ENCODE measurements at regions of chrX and their contacts with region 1.

Region 1: DNA sequence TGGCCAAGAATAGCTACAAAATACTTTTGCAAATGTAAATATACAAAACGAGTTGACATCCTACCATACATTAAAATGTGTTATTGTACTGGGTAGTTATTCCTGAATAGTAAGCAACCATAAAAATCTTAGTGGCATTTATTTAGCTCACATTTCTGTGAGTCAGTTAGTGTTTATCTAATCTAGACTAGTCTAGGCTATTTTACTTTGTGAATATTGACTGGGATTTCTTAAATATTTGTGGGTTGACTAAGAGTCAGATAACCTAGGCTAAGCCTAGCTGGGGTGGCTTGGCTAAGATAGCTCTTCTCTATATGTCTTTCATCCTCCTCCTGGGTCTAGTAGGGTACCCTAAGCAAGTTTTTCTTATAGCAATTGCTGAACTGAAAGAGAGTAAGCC is 543.8 kb upstream of the DIAPH2 start:
- DNase-seq: no peak
- ATAC-seq: no peak
- H3K4me3 ChIP-seq: no peak overlapping the region
- H3K27ac ChIP-seq: no peak overlapping the region
- H3K4me1 ChIP-seq: no peaks in the 10 kb centered on the region
- H3K27me3 ChIP-seq: no peaks in the 10 kb centered on the region
- CTCF ChIP-seq: no peak
- EP300 ChIP-seq: no peak
- POLR2A ChIP-seq: no peak
- RAD21 ChIP-seq: no peak

Region 2: DNA sequence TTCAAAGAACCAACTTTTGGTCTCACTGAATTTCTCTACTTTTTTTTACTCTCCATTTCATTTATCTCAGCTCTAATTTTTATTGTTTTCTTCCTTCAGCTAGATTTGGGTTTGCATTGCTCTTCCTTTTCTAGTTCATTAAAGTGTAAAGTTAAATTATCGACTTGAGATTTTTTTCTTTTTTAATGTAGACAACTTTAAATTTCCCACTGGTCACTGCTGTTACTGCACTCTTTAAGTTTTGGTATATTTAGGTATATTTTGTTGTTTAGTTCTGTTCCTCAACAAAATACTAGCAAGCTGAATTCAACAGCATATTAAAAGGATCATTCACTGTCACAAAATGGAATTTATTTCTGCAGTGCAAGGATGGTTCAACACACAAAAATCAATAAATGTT is 28.1 kb before region 1 on chrX:
- CTCF ChIA-PET with region 1: no interaction called
- POLR2A ChIA-PET with region 1: no interaction called
- RAD21 ChIA-PET with region 1: no interaction called
- SMC1A ChIA-PET with region 1: no interaction called
- in situ Hi-C with region 1: no loop called
- intact Hi-C with region 1: loop called (anchors 1 kb)
- DNase-seq: no peak
- ATAC-seq: no peak
- H3K4me3 ChIP-seq: no peak overlapping the region
- H3K27ac ChIP-seq: no peak overlapping the region
- H3K4me1 ChIP-seq: no peaks in the 10 kb centered on the region
- H3K27me3 ChIP-seq: no peaks in the 10 kb centered on the region
- CTCF ChIP-seq: no peak
- EP300 ChIP-seq: no peak
- POLR2A ChIP-seq: no peak
- RAD21 ChIP-seq: no peak

Measured in GM12878 (cell line).